ENCODE measurements at regions of chr2 and their contacts with region 1.

Region 1: DNA sequence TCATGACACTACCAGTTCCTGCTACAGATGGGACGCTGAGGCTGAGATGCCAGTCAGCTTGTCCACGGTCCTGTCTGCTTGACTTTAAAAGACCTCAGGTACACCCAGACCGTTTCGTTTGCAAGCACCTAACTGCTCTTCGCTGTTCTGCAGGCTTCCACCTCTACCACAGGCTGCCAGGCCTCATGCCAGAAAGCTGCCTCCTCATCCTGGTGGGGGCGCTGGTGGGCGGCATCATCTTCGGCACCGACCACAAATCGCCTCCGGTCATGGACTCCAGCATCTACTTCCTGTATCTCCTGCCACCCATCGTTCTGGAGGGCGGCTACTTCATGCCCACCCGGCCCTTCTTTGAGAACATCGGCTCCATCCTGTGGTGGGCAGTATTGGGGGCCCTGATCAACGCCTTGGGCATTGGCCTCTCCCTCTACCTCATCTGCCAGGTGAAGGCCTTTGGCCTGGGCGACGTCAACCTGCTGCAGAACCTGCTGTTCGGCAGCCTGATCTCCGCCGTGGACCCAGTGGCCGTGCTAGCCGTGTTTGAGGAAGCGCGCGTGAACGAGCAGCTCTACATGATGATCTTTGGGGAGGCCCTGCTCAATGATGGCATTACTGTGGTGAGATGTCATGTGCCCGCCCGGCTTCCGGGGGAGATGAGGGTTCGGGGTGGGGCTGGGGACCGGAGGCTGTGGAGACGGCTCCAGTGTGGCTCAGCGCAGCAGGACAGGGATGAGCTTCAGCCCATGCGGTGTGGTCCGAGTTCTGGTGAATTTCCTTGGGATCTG is 5.9 kb downstream of the SLC9A4 start:
- DNase-seq: no peak
- ATAC-seq: no peak
- H3K4me3 ChIP-seq: no peak overlapping the region
- H3K27ac ChIP-seq: no peak overlapping the region
- H3K4me1 ChIP-seq: no peaks in the 10 kb centered on the region
- H3K27me3 ChIP-seq: peaks cover 0 to 30% (median 0%) of the 10 kb centered on the region in 9 donors
- CTCF ChIP-seq: no peak
- POLR2A ChIP-seq: no peak

Region 2: GRCh38 chr2:102240640-102241370 is 238.1 kb before region 1 on chr2:
- intact Hi-C with region 1: no loop called
- DNase-seq: peak; percentile 91 to 95 (median 92)
- ATAC-seq: peak; percentile 89 to 96 (median 94)
- H3K4me3 ChIP-seq: peak overlapping the region in 6 of 12 donors; percentile 5 to 33 (median 16)
- H3K27ac ChIP-seq: peak overlapping the region; percentile 58 to 88 (median 79)
- H3K4me1 ChIP-seq: peaks cover 0 to 29% (median 11%) of the 10 kb centered on the region in 12 donors
- H3K27me3 ChIP-seq: peaks cover 0 to 2% (median 0%) of the 10 kb centered on the region in 9 donors
- CTCF ChIP-seq: peak; percentile 97 to 100 (median 99)
- POLR2A ChIP-seq: peak in 1 of 2 donors; percentile 23

Region 3: DNA sequence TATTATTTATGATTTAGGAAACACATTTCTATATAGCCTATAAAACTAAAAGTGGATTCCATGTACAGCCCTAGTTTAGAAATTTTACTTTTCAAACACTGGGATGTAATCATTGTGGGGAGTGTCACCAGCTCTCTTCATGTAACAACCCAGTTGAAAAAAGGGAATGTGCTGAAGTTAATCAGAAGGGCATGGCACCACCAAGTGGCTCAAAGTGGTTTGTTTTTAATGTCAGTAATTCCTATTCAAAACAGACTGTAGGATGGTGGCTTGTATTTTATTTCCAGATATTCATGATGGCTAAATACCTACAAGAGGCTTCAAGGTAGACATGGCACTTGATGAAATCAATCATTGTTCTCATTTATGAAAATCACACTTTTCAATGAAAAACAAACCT is 224.9 kb after region 1 on chr2:
- intact Hi-C with region 1: loop called in 7 of 10 experiments (anchors 5 kb)
- DNase-seq: no peak
- ATAC-seq: peak; percentile 51 to 63 (median 62)
- H3K4me3 ChIP-seq: no peak overlapping the region
- H3K27ac ChIP-seq: no peak overlapping the region
- H3K4me1 ChIP-seq: no peaks in the 10 kb centered on the region
- H3K27me3 ChIP-seq: peaks cover 0 to 14% (median 5%) of the 10 kb centered on the region in 9 donors
- CTCF ChIP-seq: peak in 11 of 12 donors; percentile 15 to 51 (median 37)
- POLR2A ChIP-seq: no peak